ENCODE measurements at regions of chr1 and their contacts with region 1.

Region 1: GRCh38 chr1:155017041-155017945 is 14.7 kb downstream of the ZBTB7B start:
- DNase-seq: peak; percentile 55
- H3K4me3 ChIP-seq: peak overlapping the region; percentile 40
- H3K27me3 ChIP-seq: no peaks in the 10 kb centered on the region
- CTCF ChIP-seq: peak; percentile 99

Region 2: DNA sequence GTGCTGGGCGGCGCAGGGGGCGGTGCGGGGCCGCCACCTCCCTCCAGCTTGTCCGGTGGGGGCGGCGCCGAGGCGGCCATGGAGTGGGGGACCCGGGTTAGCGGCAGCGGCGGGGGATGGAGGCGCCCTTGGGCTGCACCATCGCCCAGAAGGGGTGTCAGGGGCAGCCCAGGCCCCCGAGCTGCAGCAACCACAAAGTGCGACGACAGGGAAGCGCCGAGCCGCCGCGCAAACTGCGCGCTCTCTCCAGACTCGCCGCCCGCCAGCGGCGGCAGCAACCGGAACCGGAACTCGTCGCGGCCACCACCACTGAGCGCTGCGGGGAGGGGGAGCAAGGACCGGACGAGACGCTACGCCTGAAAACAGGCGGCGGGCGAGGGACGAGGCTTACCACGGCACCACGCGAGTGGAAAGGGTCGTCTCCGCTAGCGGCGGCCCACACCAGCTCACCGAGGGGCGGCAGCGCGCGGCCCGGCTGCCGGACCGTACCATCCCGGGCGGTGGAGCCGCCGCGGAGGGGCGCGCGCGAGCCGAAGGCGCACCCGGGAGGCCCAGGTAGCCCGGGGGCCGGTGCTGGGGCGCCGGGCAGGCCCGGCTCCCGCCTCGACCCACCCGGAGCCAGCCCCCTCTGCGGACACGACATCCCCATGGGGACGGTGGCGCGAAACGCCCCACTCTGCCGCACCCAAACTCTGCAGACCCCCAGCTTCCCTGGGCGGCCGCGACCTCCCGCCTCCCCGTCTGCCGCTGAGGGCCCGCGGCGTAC is 55.6 kb before region 1 on chr1 and contains the start of gene PYGO2:
- CTCF ChIA-PET with region 1: interaction called, 29 read pairs
- POLR2A ChIA-PET with region 1: no interaction called
- DNase-seq: no peak
- H3K4me3 ChIP-seq: peak within 1 kb of the TSS; percentile 63
- H3K27me3 ChIP-seq: no peaks in the 10 kb centered on the region
- CTCF ChIP-seq: peak; percentile 37
- polyA plus RNA-seq, gene PYGO2: 18.0 and 21.0 TPM in 2 replicates

Region 3: DNA sequence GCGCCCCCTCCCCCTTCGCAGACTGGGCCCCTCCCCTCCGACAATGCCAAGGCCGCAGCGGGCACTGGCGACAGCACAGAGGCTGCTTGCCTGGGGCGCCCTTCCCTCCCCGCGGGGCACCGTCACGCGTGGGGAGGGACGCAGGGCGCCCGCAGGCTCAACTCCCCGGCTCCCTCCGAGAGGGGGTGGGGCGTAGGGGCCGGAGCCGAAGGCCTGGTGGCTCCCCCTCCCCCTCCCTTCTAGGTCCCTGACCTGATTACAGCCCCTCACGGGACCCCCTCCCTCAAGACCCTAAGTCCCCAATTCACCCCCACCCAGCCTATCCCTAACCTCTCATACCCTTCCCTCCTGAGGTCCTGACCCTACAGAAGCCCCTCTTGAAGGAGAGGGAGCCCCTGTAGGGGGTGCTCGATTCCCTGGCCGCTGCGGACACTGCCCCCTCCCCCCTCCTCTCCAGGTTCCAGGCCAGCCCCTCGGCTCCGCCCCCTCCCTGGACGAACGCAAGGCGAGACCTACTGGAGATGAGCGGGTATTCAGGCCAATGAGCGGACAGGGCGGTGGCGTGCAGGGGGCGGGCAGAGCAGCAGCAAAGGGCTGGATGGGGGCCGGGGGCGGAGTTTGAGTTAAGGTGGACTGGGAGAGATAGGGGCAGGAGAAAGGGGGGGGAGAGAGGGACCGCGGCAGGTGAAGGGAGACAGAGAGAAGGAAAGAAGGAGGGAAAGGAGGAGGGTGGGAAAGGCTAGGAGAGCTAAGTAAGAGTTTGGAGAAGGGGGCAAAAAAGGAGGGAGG is 15.4 kb before region 1 on chr1:
- CTCF ChIA-PET with region 1: interaction called, 95 read pairs
- POLR2A ChIA-PET with region 1: no interaction called
- DNase-seq: peak; percentile 91
- H3K4me3 ChIP-seq: peak overlapping the region; percentile 64
- H3K27me3 ChIP-seq: no peaks in the 10 kb centered on the region
- CTCF ChIP-seq: peak; percentile 80

Region 4: GRCh38 chr1:155038602-155039307 is 21.5 kb after region 1 on chr1:
- CTCF ChIA-PET with region 1: interaction called, 55 read pairs
- POLR2A ChIA-PET with region 1: no interaction called
- DNase-seq: no peak
- H3K4me3 ChIP-seq: no peak overlapping the region
- H3K27me3 ChIP-seq: peaks cover 6% of the 10 kb centered on the region
- CTCF ChIP-seq: no peak

Measured in BJ (cell line).